Ovary (tissue), 10 donors: ENCODE measurements at regions of chr3 and their contacts with region 1.

Region 1: GRCh38 chr3:9352917-9353752 is 9.7 kb upstream of the THUMPD3 start:
- DNase-seq: peak; percentile 60 to 77 (median 74)
- H3K4me3 ChIP-seq: no peak overlapping the region
- H3K27ac ChIP-seq: no peak overlapping the region
- H3K4me1 ChIP-seq: no peaks in the 10 kb centered on the region
- H3K27me3 ChIP-seq: no peaks in the 10 kb centered on the region
- CTCF ChIP-seq: peak; percentile 68 to 81 (median 75)
- EP300 ChIP-seq: no peak
- POLR2A ChIP-seq: no peak

Region 2: DNA sequence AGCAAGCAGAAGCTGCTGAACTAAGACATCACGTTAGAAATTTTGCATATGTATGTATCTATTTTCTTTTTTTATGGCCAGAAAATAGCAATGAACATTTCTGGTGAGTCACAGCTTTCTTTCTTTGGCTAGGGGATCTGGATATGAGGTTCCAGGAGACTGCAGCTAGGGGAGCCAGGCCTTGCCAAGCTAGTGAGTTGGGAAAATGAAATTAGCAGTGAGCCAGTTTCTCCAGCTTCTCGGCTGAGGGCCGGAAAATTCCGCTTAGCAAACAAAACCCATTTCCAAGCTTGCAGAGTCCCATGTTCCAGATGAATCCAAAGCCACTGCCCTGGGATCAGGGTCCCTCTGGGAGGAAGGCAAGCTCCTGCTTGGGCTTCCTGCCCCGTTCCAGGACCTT is 241.3 kb before region 1 on chr3:
- intact Hi-C with region 1: no loop called
- DNase-seq: peak; percentile 46 to 70 (median 61)
- H3K4me3 ChIP-seq: no peak overlapping the region
- H3K27ac ChIP-seq: no peak overlapping the region
- H3K4me1 ChIP-seq: peaks cover 9% of the 10 kb centered on the region
- H3K27me3 ChIP-seq: no peaks in the 10 kb centered on the region
- CTCF ChIP-seq: peak in 1 of 3 donors; percentile 29
- EP300 ChIP-seq: no peak
- POLR2A ChIP-seq: no peak

Region 3: GRCh38 chr3:9422712-9423424 is 69.7 kb after region 1 on chr3:
- intact Hi-C with region 1: loop called in 2 of 4 experiments (anchors 10 kb)
- DNase-seq: peak; percentile 53 to 91 (median 82)
- H3K4me3 ChIP-seq: no peak overlapping the region
- H3K27ac ChIP-seq: peak overlapping the region in 1 of 2 donors; percentile 44
- H3K4me1 ChIP-seq: no peaks in the 10 kb centered on the region
- H3K27me3 ChIP-seq: no peaks in the 10 kb centered on the region
- CTCF ChIP-seq: peak in 2 of 3 donors; percentile 31 to 42
- EP300 ChIP-seq: no peak
- POLR2A ChIP-seq: no peak

Region 4: DNA sequence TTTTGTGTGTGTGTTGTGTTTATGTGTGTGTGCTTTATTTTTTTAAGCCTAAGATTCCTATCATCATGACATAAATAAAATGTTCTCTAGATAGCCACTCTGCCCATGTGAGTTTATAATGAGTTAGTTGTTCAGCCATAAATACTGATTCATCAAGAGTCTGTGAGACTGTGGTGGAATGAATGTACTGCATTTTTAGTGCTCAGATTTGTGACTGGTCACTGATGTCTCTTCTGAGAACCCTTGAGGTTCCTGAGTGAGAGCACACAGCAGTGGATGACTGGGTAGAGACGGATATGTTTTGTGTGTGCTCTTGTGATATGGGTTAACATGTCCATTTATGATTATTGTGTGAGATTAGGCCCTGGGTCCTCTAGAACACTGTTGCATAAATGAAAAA is 95.5 kb after region 1 on chr3:
- intact Hi-C with region 1: loop called in 1 of 4 experiments (anchors 10 kb)
- DNase-seq: no peak
- H3K4me3 ChIP-seq: no peak overlapping the region
- H3K27ac ChIP-seq: no peak overlapping the region
- H3K4me1 ChIP-seq: no peaks in the 10 kb centered on the region
- H3K27me3 ChIP-seq: no peaks in the 10 kb centered on the region
- CTCF ChIP-seq: no peak
- EP300 ChIP-seq: no peak
- POLR2A ChIP-seq: no peak